ENCODE measurements at regions of chr20 and their contacts with region 1.

Region 1: GRCh38 chr20:37288091-37288490 is 1.4 kb upstream of the MANBAL start:
- DNase-seq: no peak
- ATAC-seq: no peak
- H3K4me3 Mint-ChIP-seq: no peak overlapping the region
- H3K27ac Mint-ChIP-seq: no peak overlapping the region
- H3K4me1 Mint-ChIP-seq: peaks cover 22% of the 10 kb centered on the region
- H3K27me3 Mint-ChIP-seq: peaks cover 3% of the 10 kb centered on the region

Region 2: DNA sequence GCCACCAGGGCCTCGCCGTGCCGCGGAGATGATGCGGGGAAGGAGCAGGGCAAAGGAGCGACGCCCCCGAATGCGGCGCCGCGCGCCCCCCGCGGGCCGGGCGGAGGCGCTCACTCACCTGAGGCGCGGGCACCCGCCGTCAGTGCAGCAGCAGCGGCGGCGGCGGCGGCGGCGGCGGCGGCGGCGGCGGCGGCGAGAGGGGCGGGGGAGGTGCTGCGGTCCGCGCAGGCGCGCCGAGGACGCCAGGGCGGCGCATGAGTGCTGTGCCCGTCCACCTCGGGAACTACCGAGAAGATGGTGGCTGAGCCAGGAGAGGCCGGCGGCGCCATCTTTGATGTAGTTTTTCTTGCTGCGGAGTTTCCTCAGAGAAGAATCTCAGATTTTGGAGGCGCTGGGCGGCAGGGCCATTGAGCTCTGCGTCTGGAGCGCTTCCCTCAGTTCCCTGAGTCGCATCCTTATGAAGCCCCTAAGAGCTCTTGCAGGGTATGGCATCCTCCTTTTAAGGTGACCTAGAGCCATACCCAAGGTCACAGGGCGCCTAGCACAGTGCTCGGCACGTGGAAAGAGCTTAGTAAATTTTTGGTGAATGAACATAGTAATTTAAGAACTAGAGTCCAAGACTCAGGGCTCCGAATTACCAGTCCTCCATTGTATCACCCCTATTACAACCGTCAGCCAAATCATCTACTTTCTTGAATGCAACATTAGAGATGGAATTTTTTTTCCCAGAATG is 542.0 kb before region 1 on chr20 and contains the start of gene NDRG3:
- CTCF ChIA-PET with region 1: no interaction called
- POLR2A ChIA-PET with region 1: no interaction called
- intact Hi-C with region 1: loop called in 1 of 2 experiments (anchors 5 kb)
- DNase-seq: peak; percentile 96
- ATAC-seq: peak; percentile 99
- H3K4me3 Mint-ChIP-seq: peak within 1 kb of the TSS; percentile 81
- H3K27ac Mint-ChIP-seq: peak within 1 kb of the TSS; percentile 87
- H3K4me1 Mint-ChIP-seq: peaks cover 20% of the 10 kb centered on the region
- H3K27me3 Mint-ChIP-seq: no peaks in the 10 kb centered on the region
- total RNA-seq, gene NDRG3: 24.8 to 27.5 TPM

Region 3: GRCh38 chr20:37095599-37096414 is 192.3 kb before region 1 on chr20 and contains the start of gene RBL1:
- CTCF ChIA-PET with region 1: no interaction called
- POLR2A ChIA-PET with region 1: no interaction called
- intact Hi-C with region 1: loop called in 1 of 2 experiments (anchors 2 kb)
- DNase-seq: peak; percentile 94
- ATAC-seq: peak; percentile 83
- H3K4me3 Mint-ChIP-seq: peak within 1 kb of the TSS; percentile 95
- H3K27ac Mint-ChIP-seq: peak within 1 kb of the TSS; percentile 100
- H3K4me1 Mint-ChIP-seq: peaks cover 26% of the 10 kb centered on the region
- H3K27me3 Mint-ChIP-seq: no peaks in the 10 kb centered on the region
- total RNA-seq, gene RBL1: 39.5 to 43.2 TPM

Region 4: DNA sequence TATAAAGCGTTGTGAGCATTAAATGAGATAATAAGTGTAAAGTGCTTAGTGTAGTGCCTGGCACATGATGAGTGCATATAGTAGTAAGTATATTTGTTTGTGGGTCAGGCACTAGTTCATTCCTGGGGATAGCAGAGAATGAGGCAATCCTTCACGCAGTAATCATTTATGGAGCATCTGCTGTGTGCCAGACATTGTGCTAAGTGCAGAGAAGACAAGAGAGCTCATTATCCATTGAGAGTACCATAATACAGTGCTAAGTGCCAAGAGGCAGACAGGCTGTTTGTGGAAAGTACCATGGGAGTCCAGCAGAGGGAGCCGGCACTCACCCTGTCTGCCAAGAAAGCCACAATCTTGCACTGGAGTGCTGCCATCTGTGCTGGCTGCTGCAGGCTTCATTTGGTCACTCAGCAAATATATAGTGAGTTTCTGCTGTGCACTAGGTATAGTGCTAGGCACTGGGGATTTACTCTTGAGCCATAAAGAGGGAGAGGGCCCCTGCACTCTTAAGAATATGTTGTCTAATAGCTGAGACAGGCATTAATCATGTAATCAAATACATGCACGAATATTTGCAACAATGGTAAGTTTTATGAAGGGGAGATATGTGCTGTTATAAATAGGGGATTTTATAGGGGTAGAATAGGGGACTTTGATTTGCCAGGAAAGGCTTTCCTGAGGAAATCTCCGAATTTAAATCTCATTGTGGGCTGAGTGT is 95.8 kb before region 1 on chr20:
- CTCF ChIA-PET with region 1: interaction called, 12 read pairs
- POLR2A ChIA-PET with region 1: no interaction called
- intact Hi-C with region 1: no loop called
- DNase-seq: peak; percentile 83
- ATAC-seq: peak; percentile 72
- H3K4me3 Mint-ChIP-seq: no peak overlapping the region
- H3K27ac Mint-ChIP-seq: peak overlapping the region; percentile 49
- H3K4me1 Mint-ChIP-seq: peaks cover 76% of the 10 kb centered on the region
- H3K27me3 Mint-ChIP-seq: no peaks in the 10 kb centered on the region

Region 5: GRCh38 chr20:37202267-37202943 is 85.7 kb before region 1 on chr20:
- CTCF ChIA-PET with region 1: no interaction called
- POLR2A ChIA-PET with region 1: no interaction called
- intact Hi-C with region 1: no loop called
- DNase-seq: peak; percentile 32
- ATAC-seq: peak; percentile 53
- H3K4me3 Mint-ChIP-seq: no peak overlapping the region
- H3K27ac Mint-ChIP-seq: no peak overlapping the region
- H3K4me1 Mint-ChIP-seq: no peaks in the 10 kb centered on the region
- H3K27me3 Mint-ChIP-seq: no peaks in the 10 kb centered on the region

Region 6: GRCh38 chr20:37345339-37346230 is 57.5 kb after region 1 on chr20 and contains the start of gene SRC:
- CTCF ChIA-PET with region 1: no interaction called
- POLR2A ChIA-PET with region 1: no interaction called
- intact Hi-C with region 1: loop called (anchors 2 to 5 kb)
- DNase-seq: peak; percentile 71
- ATAC-seq: peak; percentile 62
- H3K4me3 Mint-ChIP-seq: peak within 1 kb of the TSS; percentile 68
- H3K27ac Mint-ChIP-seq: peak within 1 kb of the TSS; percentile 49
- H3K4me1 Mint-ChIP-seq: peaks cover 11% of the 10 kb centered on the region
- H3K27me3 Mint-ChIP-seq: no peaks in the 10 kb centered on the region
- total RNA-seq, gene SRC: 4.2 to 5.7 TPM

Measured in activated CD4-positive, alpha-beta T cell treated with anti-CD3 and anti-CD28 coated beads for 36 hours (primary cell).